Activated CD4-positive, alpha-beta T cell treated with anti-CD3 and anti-CD28 coated beads, Interleukin-2, amount 10 ng/mL, durations not matched to agents 24 days and 14 days (primary cell): ENCODE measurements at regions of chr10 and their contacts with region 1.

Region 1: GRCh38 chr10:60099998-60100747 is 193.8 kb upstream of the CCDC6 start:
- DNase-seq: peak; percentile 66
- H3K4me3 Mint-ChIP-seq: no peak overlapping the region
- H3K27ac Mint-ChIP-seq: no peak overlapping the region
- H3K4me1 Mint-ChIP-seq: no peaks in the 10 kb centered on the region
- H3K27me3 Mint-ChIP-seq: no peaks in the 10 kb centered on the region

Region 2: DNA sequence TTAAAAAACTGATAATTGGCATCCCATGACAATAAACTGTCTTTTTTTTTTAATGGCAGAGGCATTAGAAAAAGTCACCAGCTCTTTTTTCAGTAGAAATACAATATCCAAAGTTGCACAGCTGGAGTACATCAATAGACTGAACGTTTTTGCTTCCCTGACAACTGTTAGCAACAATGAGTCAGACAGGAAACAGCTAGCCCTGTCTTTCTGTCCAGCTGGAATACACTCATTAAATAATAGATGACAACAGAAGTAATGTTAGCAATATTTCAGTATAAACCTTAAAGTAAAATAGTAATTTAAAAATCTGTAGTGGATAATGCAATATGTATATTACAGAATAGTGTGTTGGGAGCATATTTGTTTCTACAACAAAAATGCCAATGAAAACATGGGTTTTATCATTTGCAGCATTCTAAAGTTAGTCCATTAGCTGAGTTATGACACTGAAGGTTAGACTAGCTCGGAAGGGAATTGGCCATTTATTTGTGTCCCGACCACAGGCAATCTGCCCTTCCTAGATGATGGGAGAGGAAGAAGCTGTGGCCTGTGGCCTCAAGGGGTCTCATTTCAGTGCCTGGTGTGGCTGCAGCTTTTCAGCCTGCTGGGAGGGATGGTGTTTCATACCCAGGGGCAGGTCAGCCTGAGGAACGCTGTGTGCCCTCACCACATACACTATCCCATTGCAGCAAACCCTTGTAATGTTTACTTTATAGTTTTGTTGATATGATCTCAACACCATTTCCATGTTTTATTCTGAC is 563.8 kb before region 1 on chr10:
- intact Hi-C with region 1: no loop called
- DNase-seq: no peak
- H3K4me3 Mint-ChIP-seq: no peak overlapping the region
- H3K27ac Mint-ChIP-seq: no peak overlapping the region
- H3K4me1 Mint-ChIP-seq: no peaks in the 10 kb centered on the region
- H3K27me3 Mint-ChIP-seq: no peaks in the 10 kb centered on the region

Region 3: DNA sequence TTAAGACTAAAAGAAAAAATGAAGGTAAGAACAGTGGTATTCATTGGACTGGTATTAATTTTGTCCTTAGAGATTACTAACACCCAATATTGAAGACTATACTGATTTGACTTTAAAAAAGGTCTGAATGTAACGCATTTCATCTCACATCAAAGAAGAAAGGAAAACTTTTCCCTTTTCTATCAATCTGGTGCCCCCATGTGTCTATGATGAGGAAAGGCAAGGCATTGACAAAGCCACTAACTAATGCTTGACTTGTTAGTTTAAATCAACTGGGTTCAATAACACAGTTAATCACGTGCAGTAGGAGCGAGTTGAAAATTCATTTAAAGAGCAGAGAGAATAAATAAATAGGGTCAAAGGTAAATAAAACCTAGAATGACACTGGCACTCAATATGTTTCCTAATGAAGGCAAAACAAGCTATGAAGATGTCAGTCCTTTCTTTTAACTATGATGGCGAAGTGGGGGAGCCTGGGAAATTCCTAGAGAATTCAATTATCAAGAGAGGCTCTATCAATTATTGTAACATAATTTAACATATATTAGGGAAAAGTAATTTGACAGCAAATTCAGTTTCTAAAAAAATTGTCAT is 108.6 kb after region 1 on chr10:
- intact Hi-C with region 1: loop called (anchors 1 kb)
- DNase-seq: no peak
- H3K4me3 Mint-ChIP-seq: no peak overlapping the region
- H3K27ac Mint-ChIP-seq: peak overlapping the region; percentile 54
- H3K4me1 Mint-ChIP-seq: peaks cover 31% of the 10 kb centered on the region
- H3K27me3 Mint-ChIP-seq: no peaks in the 10 kb centered on the region

Region 4: DNA sequence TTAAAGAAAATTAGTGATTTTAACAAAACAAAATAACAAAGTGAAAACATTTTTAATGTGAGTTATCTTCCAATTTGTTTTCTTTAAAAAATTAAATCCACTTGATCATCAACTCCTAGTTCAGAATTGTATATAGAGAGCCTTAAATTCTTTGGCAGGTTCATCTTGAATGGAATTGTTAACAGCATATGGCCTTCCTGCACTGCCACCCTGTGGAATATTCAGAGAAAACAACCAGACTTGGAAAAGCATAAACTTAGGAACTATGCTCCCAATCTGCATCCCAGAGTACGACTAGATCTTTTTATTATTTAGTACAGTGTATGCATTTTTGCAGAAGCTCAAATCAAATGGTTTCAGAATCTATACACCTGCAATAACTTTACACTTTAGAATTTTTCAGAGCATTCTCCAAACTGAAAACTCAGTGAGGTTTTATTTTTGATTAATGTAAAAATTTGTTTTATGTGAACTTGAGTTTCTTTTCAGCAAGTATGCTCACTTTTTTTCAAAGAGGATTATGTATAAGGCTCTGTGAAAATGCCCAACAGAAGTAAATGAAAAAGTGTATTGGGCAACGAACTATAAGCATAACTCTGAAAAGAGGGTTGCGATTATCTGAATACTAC is 334.4 kb after region 1 on chr10:
- intact Hi-C with region 1: loop called (anchors 1 kb)
- DNase-seq: no peak
- H3K4me3 Mint-ChIP-seq: no peak overlapping the region
- H3K27ac Mint-ChIP-seq: no peak overlapping the region
- H3K4me1 Mint-ChIP-seq: peaks cover 2% of the 10 kb centered on the region
- H3K27me3 Mint-ChIP-seq: no peaks in the 10 kb centered on the region

Region 5: GRCh38 chr10:60778214-60779029 is 678.2 kb after region 1 on chr10 and contains the start of gene CDK1:
- intact Hi-C with region 1: loop called (anchors 10 kb)
- DNase-seq: peak; percentile 99
- H3K4me3 Mint-ChIP-seq: peak within 1 kb of the TSS; percentile 99
- H3K27ac Mint-ChIP-seq: peak within 1 kb of the TSS; percentile 99
- H3K4me1 Mint-ChIP-seq: peaks cover 32% of the 10 kb centered on the region
- H3K27me3 Mint-ChIP-seq: peaks cover 2% of the 10 kb centered on the region
- total RNA-seq, gene CDK1: 101 and 105 TPM in 2 replicates